Cardiac septum (tissue), 1 donor: ENCODE measurements at regions of chr4 and their contacts with region 1.

Region 1: GRCh38 chr4:184409911-184410692 is 64.2 kb downstream of the IRF2 start:
- DNase-seq: no peak

Region 2: GRCh38 chr4:184287697-184288255 is 122.3 kb before region 1 on chr4:
- intact Hi-C with region 1: loop called (anchors 5 kb)
- DNase-seq: no peak